Thyroid gland (tissue), 4 donors: ENCODE measurements at regions of chr6 and their contacts with region 1.

Region 1: DNA sequence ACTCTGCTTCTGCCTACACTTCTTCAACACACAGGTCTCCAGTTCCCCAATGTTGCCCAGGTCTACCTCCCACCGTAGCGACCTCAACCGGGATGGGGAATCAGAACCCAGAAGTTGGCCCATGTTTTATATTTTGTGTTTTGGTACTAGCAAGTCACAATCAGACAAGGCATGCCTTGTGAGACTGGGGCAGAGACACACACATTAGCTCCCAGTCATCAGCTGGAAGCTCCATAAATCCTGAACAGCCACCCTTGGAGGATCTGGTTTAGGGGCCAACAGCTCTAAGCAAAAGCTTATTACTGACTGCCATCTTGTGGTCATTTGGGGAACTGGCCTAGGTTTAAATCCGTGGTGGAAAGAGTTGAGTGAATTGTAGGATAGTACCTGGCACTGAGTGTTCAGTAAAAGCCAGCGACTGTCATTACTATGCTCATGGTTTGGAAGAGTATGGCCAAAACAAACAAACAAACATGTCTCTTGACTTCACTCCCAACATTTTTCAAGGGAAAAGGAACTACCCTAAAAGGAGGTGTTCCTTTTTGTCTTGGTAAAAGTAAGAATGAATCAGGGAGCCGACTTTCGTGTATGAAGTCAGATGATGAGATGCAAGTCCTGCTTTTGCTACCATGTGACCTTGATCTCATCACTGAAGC is 40.5 kb downstream of the PIM1 start:
- DNase-seq: peak; percentile 77 to 80
- H3K4me3 ChIP-seq: no peak overlapping the region
- H3K27ac ChIP-seq: no peak overlapping the region
- H3K4me1 ChIP-seq: peaks cover 6 to 11% of the 10 kb centered on the region in 2 donors
- H3K27me3 ChIP-seq: no peaks in the 10 kb centered on the region
- CTCF ChIP-seq: peak; percentile 85 to 99 (median 94)
- POLR2A ChIP-seq: no peak

Region 2: GRCh38 chr6:36765594-36766398 is 444.6 kb before region 1 on chr6:
- intact Hi-C with region 1: loop called (anchors 10 kb)
- DNase-seq: peak; percentile 77 to 82
- H3K4me3 ChIP-seq: no peak overlapping the region
- H3K27ac ChIP-seq: no peak overlapping the region
- H3K4me1 ChIP-seq: peaks cover 0 to 7% of the 10 kb centered on the region in 2 donors
- H3K27me3 ChIP-seq: no peaks in the 10 kb centered on the region
- CTCF ChIP-seq: peak; percentile 30 to 85 (median 81)
- POLR2A ChIP-seq: no peak

Region 3: GRCh38 chr6:36874443-36875249 is 335.8 kb before region 1 on chr6 and contains the start of gene PPIL1:
- intact Hi-C with region 1: loop called (anchors 10 kb)
- DNase-seq: peak; percentile 80 to 81
- H3K4me3 ChIP-seq: peak within 1 kb of the TSS; percentile 38 to 94 (median 74)
- H3K27ac ChIP-seq: peak within 1 kb of the TSS; percentile 67 to 85 (median 77)
- H3K4me1 ChIP-seq: peaks cover 12 to 19% of the 10 kb centered on the region in 2 donors
- H3K27me3 ChIP-seq: no peaks in the 10 kb centered on the region
- CTCF ChIP-seq: peak in 2 of 6 experiments; percentile 5 to 15
- POLR2A ChIP-seq: peak in 1 of 2 donors; percentile 65
- total RNA-seq, gene PPIL1: 35.3 to 69.4 (median 44.3) TPM

Region 4: DNA sequence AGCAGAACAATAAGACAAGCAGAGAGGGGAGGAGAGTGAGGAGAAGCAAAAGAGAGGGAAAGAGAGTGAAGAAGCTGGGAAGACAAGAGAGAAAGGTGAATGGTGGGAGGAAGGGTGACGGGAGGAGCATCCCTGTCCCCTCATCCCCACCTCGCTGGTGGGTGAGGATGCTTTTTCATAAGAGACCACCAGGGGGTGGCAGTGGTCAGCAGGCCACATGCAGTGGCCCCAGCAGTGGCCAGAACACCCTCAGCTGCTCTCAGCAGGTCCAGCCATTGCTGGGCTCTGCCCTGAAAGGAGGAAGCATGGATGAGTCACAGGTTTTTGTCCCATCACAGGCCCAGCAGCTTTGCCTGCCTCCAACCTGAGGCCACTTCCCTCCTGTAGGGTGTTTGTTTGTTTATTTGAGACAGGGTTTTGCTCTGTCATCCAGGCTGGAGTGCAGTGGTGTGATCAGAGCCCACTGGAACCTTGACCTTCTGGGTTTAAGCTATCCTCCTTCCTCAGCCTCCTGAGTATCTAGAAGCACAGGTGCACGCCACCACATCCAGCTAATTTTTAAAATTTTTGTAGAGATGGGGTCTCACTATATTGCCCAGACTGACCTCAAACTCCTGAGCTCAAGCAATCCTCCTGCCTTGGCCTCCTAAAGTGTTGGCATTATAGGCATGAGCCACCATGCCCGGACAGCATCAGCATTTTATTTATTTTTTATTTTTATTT is 181.0 kb before region 1 on chr6:
- intact Hi-C with region 1: loop called (anchors 10 kb)
- DNase-seq: peak; percentile 49 to 53
- H3K4me3 ChIP-seq: no peak overlapping the region
- H3K27ac ChIP-seq: no peak overlapping the region
- H3K4me1 ChIP-seq: no peaks in the 10 kb centered on the region
- H3K27me3 ChIP-seq: no peaks in the 10 kb centered on the region
- CTCF ChIP-seq: peak in 4 of 6 experiments; percentile 46 to 61 (median 60)
- POLR2A ChIP-seq: no peak

Region 5: DNA sequence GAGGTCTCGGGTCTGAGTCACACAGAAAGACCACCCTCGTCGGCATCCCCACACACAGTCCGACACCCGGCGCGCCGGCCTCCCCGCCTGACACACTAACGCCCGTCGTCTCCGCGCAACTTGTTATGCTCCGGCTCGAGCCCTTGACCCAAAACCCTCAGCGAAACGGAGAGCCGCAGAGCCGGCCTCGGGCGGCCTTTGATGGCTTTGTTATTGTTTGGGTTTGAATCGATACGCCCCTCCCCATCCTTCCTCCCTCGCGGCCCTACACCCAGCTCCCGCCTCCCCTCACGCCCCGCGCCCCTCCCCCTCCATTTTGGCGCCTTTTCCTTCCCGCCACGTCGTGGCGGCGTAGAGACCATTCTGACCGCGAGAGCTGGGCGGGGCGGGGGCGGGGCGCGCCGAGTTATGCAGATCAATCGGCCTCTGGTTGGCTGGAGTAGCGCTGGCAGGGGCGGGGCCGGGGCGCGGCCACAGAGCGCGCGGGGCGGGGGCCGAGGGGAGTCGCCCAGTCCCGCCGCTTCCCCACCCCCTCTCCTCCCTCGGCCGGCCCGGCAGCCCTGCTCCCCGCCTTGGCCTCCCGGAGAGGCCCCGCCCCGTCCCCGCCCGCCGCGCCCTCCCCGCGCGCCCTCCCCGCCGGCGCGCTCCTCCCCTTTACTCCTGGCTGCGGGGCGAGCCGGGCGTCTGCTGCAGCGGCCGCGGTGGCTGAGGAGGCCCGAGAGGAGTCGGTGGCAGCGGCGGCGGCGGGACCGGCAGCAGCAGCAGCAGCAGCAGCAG is 40.8 kb before region 1 on chr6 and contains the start of gene PIM1:
- intact Hi-C with region 1: loop called (anchors 5 kb)
- DNase-seq: peak; percentile 100
- H3K4me3 ChIP-seq: peak within 1 kb of the TSS; percentile 95 to 100 (median 96)
- H3K27ac ChIP-seq: peak within 1 kb of the TSS; percentile 87 to 95 (median 88)
- H3K4me1 ChIP-seq: peaks cover 13 to 37% of the 10 kb centered on the region in 2 donors
- H3K27me3 ChIP-seq: no peaks in the 10 kb centered on the region
- CTCF ChIP-seq: no peak
- POLR2A ChIP-seq: peak; percentile 95 to 98
- total RNA-seq, gene PIM1: 13.1 to 54.5 (median 22.2) TPM

Region 6: DNA sequence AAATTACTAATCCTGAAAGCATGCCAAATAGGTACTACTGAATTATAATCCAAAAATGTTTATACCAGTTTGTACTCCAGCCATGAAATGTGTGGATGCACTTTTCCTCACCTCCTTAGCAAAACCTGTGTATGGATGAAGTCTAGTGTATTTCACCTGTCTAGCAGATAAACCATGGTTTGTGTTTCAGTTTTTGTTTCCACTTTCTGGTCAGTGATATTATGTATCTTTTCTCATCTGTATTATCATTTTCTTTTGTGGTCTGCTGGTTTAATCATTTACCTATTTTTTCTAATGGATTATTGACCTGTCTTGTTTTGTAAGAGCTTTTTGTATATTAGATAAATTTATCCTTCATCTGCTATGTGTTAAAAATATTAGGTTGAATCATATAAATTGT is 88.5 kb after region 1 on chr6:
- intact Hi-C with region 1: no loop called
- DNase-seq: no peak
- H3K4me3 ChIP-seq: no peak overlapping the region
- H3K27ac ChIP-seq: no peak overlapping the region
- H3K4me1 ChIP-seq: no peaks in the 10 kb centered on the region
- H3K27me3 ChIP-seq: no peaks in the 10 kb centered on the region
- CTCF ChIP-seq: no peak
- POLR2A ChIP-seq: no peak